ENCODE measurements at regions of chr5 and their contacts with region 1.

Region 1: GRCh38 chr5:132495667-132496190 is 5.2 kb upstream of the IRF1 start:
- DNase-seq: peak; percentile 93 to 94
- H3K4me3 ChIP-seq: peak overlapping the region; percentile 46 to 58
- H3K27ac ChIP-seq: peak overlapping the region; percentile 88 to 91
- H3K4me1 ChIP-seq: peaks cover 8 to 11% of the 10 kb centered on the region in 2 donors
- H3K27me3 ChIP-seq: no peaks in the 10 kb centered on the region
- CTCF ChIP-seq: peak; percentile 13 to 19 (median 18)
- POLR2A ChIP-seq: peak; percentile 20 to 43

Region 2: GRCh38 chr5:132354381-132355139 is 141.2 kb before region 1 on chr5:
- intact Hi-C with region 1: no loop called
- DNase-seq: no peak
- H3K4me3 ChIP-seq: no peak overlapping the region
- H3K27ac ChIP-seq: no peak overlapping the region
- H3K4me1 ChIP-seq: peaks cover 0 to 6% of the 10 kb centered on the region in 2 donors
- H3K27me3 ChIP-seq: no peaks in the 10 kb centered on the region
- CTCF ChIP-seq: no peak
- POLR2A ChIP-seq: no peak

Region 3: GRCh38 chr5:132387649-132388117 is 108.0 kb before region 1 on chr5:
- intact Hi-C with region 1: loop called (anchors 2 kb)
- DNase-seq: peak; percentile 71 to 90
- H3K4me3 ChIP-seq: no peak overlapping the region
- H3K27ac ChIP-seq: peak overlapping the region; percentile 91 to 92
- H3K4me1 ChIP-seq: peaks cover 19 to 20% of the 10 kb centered on the region in 2 donors
- H3K27me3 ChIP-seq: no peaks in the 10 kb centered on the region
- CTCF ChIP-seq: no peak
- POLR2A ChIP-seq: no peak

Region 4: DNA sequence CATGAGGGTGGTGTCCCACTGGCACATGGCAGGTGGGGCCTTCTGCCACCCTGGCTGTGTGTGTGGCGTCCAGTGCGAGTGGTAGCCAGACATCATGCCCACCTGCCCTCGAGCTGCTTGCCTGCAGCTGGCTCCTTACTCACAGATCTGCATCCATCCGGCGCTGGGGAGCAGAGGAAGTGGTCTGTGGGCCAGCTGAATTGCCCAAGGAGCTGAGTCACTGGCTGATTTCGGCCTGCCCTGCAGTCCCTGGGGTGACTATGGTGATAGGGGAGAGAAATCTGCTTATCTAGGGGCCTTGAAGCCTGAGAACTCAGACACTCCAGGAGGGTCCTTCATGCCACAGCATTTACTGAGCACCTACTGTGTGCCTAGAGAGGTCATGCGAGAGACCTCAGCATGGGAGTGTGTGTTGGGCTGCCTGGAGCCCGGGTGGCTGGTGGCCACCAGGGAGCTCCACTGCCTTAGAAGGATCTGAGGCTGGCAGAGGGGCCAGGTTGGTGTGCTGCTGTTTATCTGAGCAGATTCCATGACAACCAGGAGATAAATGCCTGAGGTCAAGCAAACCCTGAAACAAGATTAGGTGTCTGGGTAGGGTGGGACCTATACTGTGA is 69.1 kb before region 1 on chr5:
- intact Hi-C with region 1: loop called (anchors 5 kb)
- DNase-seq: peak; percentile 71 to 77
- H3K4me3 ChIP-seq: no peak overlapping the region
- H3K27ac ChIP-seq: peak overlapping the region; percentile 51 to 68
- H3K4me1 ChIP-seq: peaks cover 27 to 34% of the 10 kb centered on the region in 2 donors
- H3K27me3 ChIP-seq: no peaks in the 10 kb centered on the region
- CTCF ChIP-seq: peak in 2 of 4 experiments; percentile 15 to 43
- POLR2A ChIP-seq: no peak